Right cardiac atrium (tissue), 5 donors: ENCODE measurements at regions of chr1 and their contacts with region 1.

Region 1: DNA sequence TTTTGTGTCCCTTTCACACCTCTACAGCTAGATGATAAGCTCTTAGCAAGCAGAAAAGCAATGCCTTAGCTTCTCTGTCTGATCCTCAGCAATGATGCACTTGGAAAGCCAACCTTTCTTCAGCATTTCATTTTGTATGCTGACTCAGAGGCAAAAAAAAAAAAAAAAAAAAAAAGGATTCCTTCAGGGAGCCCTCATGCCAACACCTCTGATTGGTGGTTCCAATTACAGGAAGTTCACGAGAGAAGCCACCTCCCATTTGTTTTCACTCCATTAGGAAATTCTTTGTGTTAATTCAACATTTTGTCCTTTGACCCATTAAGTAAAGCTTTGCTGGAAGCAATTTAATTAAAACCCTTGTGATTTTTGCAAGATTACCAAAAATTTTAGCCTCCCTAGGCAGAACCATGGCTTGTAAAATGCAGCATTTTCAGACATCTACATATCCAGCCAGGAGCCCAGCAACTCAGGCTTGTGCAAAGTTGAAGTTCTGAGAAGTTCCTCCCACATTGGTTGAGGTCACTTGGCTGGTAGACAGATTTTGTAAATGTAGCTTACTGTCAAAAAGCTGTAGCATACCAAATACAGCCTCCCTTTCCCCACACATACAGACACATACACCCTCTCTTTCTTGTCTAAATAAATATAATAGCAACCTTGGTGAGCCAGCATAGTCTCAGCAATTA is 27.1 kb upstream of the VTCN1 start:
- DNase-seq: no peak
- ATAC-seq: peak; percentile 36 to 49
- H3K4me3 ChIP-seq: no peak overlapping the region
- H3K27ac ChIP-seq: no peak overlapping the region
- H3K4me1 ChIP-seq: peaks cover 2% of the 10 kb centered on the region
- H3K27me3 ChIP-seq: no peaks in the 10 kb centered on the region

Region 2: GRCh38 chr1:117180147-117180967 is 57.5 kb before region 1 on chr1:
- intact Hi-C with region 1: loop called in 1 of 4 experiments (anchors 10 kb)
- DNase-seq: no peak
- ATAC-seq: peak in 1 of 2 donors; percentile 48
- H3K4me3 ChIP-seq: no peak overlapping the region
- H3K27ac ChIP-seq: peak overlapping the region; percentile 27
- H3K4me1 ChIP-seq: peaks cover 6% of the 10 kb centered on the region
- H3K27me3 ChIP-seq: no peaks in the 10 kb centered on the region

Region 3: GRCh38 chr1:117493906-117494305 is 256.1 kb after region 1 on chr1:
- intact Hi-C with region 1: no loop called
- DNase-seq: no peak
- ATAC-seq: no peak
- H3K4me3 ChIP-seq: no peak overlapping the region
- H3K27ac ChIP-seq: no peak overlapping the region
- H3K4me1 ChIP-seq: no peaks in the 10 kb centered on the region
- H3K27me3 ChIP-seq: no peaks in the 10 kb centered on the region